B cell (primary cell): ENCODE measurements at regions of chr22 and their contacts with region 1.

Region 1: GRCh38 chr22:36123673-36124630 is 36.6 kb downstream of the APOL3 start:
- DNase-seq: peak; percentile 94
- ATAC-seq: peak; percentile 100
- H3K4me3 ChIP-seq: peak overlapping the region; percentile 15 to 55 (median 44)
- H3K4me3 Mint-ChIP-seq: peak overlapping the region; percentile 88
- H3K27ac ChIP-seq: peak overlapping the region in 1 of 2 donors; percentile 14
- H3K27ac Mint-ChIP-seq: peak overlapping the region; percentile 83
- H3K4me1 ChIP-seq: peaks cover 0 to 9% of the 10 kb centered on the region in 2 donors
- H3K4me1 Mint-ChIP-seq: peaks cover 6% of the 10 kb centered on the region
- H3K27me3 ChIP-seq: peaks cover 0 to 14% (median 7%) of the 10 kb centered on the region in 4 experiments
- H3K27me3 Mint-ChIP-seq: peaks cover 9% of the 10 kb centered on the region
- CTCF ChIP-seq: peak; percentile 96

Region 2: GRCh38 chr22:35430897-35431322 is 693.0 kb before region 1 on chr22:
- CTCF ChIA-PET with region 1: interaction called, 3 read pairs
- POLR2A ChIA-PET with region 1: no interaction called
- intact Hi-C with region 1: loop called (anchors 10 kb)
- DNase-seq: peak; percentile 68
- ATAC-seq: peak; percentile 80
- H3K4me3 ChIP-seq: no peak overlapping the region
- H3K4me3 Mint-ChIP-seq: no peak overlapping the region
- H3K27ac ChIP-seq: no peak overlapping the region
- H3K27ac Mint-ChIP-seq: no peak overlapping the region
- H3K4me1 ChIP-seq: no peaks in the 10 kb centered on the region
- H3K4me1 Mint-ChIP-seq: peaks cover 6% of the 10 kb centered on the region
- H3K27me3 ChIP-seq: no peaks in the 10 kb centered on the region
- H3K27me3 Mint-ChIP-seq: no peaks in the 10 kb centered on the region
- CTCF ChIP-seq: peak; percentile 82

Region 3: GRCh38 chr22:35582861-35583670 is 540.9 kb before region 1 on chr22:
- CTCF ChIA-PET with region 1: interaction called, 9 read pairs
- POLR2A ChIA-PET with region 1: no interaction called
- intact Hi-C with region 1: loop called (anchors 10 kb)
- DNase-seq: peak; percentile 81
- ATAC-seq: peak; percentile 77
- H3K4me3 ChIP-seq: no peak overlapping the region
- H3K4me3 Mint-ChIP-seq: no peak overlapping the region
- H3K27ac ChIP-seq: no peak overlapping the region
- H3K27ac Mint-ChIP-seq: no peak overlapping the region
- H3K4me1 ChIP-seq: peaks cover 0 to 7% of the 10 kb centered on the region in 2 donors
- H3K4me1 Mint-ChIP-seq: no peaks in the 10 kb centered on the region
- H3K27me3 ChIP-seq: no peaks in the 10 kb centered on the region
- H3K27me3 Mint-ChIP-seq: no peaks in the 10 kb centered on the region
- CTCF ChIP-seq: peak; percentile 95

Region 4: GRCh38 chr22:35622191-35622913 is 501.6 kb before region 1 on chr22:
- CTCF ChIA-PET with region 1: interaction called, 3 read pairs
- POLR2A ChIA-PET with region 1: no interaction called
- intact Hi-C with region 1: loop called (anchors 5 kb)
- DNase-seq: no peak
- ATAC-seq: no peak
- H3K4me3 ChIP-seq: no peak overlapping the region
- H3K4me3 Mint-ChIP-seq: no peak overlapping the region
- H3K27ac ChIP-seq: no peak overlapping the region
- H3K27ac Mint-ChIP-seq: no peak overlapping the region
- H3K4me1 ChIP-seq: peaks cover 5% of the 10 kb centered on the region in 2 donors
- H3K4me1 Mint-ChIP-seq: peaks cover 5% of the 10 kb centered on the region
- H3K27me3 ChIP-seq: peaks cover 0 to 32% (median 22%) of the 10 kb centered on the region in 4 experiments
- H3K27me3 Mint-ChIP-seq: peaks cover 33% of the 10 kb centered on the region
- CTCF ChIP-seq: no peak

Region 5: DNA sequence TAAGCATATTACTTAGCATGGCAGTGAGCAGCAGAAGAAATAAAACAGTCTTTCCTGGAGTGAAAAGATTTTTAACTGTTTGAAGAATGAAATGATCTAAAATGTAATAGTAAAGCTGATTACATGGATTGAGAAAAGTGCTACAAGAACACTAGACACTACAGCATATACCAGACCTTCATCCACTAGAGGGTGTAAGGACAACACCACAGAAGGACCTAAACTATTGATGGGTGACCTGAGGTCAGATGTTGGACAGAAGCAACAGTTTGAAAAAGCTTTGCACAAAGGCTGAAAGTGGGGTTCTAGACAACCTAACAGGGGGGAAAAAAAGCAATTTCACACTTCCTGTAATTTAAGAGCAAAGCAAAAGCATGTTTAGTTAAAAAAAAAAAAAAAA is 193.0 kb before region 1 on chr22:
- CTCF ChIA-PET with region 1: interaction called, 12 read pairs
- POLR2A ChIA-PET with region 1: no interaction called
- intact Hi-C with region 1: no loop called
- DNase-seq: peak; percentile 34
- ATAC-seq: no peak
- H3K4me3 ChIP-seq: no peak overlapping the region
- H3K4me3 Mint-ChIP-seq: no peak overlapping the region
- H3K27ac ChIP-seq: no peak overlapping the region
- H3K27ac Mint-ChIP-seq: no peak overlapping the region
- H3K4me1 ChIP-seq: no peaks in the 10 kb centered on the region
- H3K4me1 Mint-ChIP-seq: no peaks in the 10 kb centered on the region
- H3K27me3 ChIP-seq: peaks cover 0 to 4% (median 2%) of the 10 kb centered on the region in 4 experiments
- H3K27me3 Mint-ChIP-seq: peaks cover 7% of the 10 kb centered on the region
- CTCF ChIP-seq: no peak

Region 6: DNA sequence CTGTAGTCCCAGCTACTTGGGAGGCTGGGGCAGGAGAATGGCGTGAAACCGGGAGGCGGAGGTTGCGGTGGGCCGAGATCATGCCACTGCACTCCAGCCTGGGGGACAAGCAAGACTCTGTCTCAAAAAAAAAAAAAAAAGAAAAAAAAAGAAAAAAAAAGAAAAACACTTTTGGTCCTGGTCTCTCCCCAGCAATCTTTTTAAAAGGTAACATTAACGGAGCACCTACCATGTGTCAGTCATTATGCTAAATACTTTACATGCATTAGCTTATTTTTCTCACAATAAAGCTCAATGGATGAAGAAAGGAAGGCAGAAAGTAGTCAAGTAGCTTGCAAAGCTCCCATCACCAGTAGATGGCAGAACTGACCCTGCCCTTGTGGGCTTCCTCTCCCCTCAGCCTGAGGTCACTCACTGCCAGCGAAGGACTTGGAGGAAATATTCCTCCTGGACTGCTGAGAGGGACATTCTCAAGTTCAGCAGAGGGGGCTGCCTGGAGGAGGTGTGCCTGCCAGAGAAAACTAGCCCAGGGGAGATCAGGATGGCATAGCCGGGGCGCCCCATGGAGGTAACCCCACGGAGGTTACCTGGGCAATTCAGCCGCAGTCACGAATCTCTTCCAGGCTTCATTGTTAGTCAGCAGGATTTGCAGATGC is 21.1 kb after region 1 on chr22:
- CTCF ChIA-PET with region 1: no interaction called
- POLR2A ChIA-PET with region 1: no interaction called
- intact Hi-C with region 1: no loop called
- DNase-seq: peak; percentile 55
- ATAC-seq: peak; percentile 74
- H3K4me3 ChIP-seq: no peak overlapping the region
- H3K4me3 Mint-ChIP-seq: no peak overlapping the region
- H3K27ac ChIP-seq: no peak overlapping the region
- H3K27ac Mint-ChIP-seq: no peak overlapping the region
- H3K4me1 ChIP-seq: no peaks in the 10 kb centered on the region
- H3K4me1 Mint-ChIP-seq: peaks cover 1% of the 10 kb centered on the region
- H3K27me3 ChIP-seq: no peaks in the 10 kb centered on the region
- H3K27me3 Mint-ChIP-seq: no peaks in the 10 kb centered on the region
- CTCF ChIP-seq: peak; percentile 69

Region 7: DNA sequence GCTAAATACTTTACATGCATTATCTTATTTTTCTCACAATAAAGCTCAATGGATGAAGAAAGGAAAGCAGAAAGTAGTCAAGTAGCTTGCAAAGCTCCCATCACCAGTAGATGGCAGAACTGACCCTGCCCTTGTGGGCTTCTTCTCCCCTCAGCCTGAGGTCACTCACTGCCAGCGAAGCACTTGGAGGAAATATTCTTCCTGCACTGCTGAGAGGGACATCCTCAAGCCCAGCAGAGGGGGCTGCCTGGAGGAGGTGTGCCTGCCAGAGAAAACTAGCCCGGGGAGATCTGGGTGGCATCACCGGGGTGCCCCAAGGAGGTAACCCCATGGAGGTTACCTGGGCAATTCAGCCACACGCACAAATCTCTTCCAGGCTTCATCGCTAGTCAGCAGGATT is 71.0 kb after region 1 on chr22:
- CTCF ChIA-PET with region 1: no interaction called
- POLR2A ChIA-PET with region 1: no interaction called
- intact Hi-C with region 1: no loop called
- DNase-seq: peak; percentile 47
- ATAC-seq: peak; percentile 49
- H3K4me3 ChIP-seq: no peak overlapping the region
- H3K4me3 Mint-ChIP-seq: no peak overlapping the region
- H3K27ac ChIP-seq: no peak overlapping the region
- H3K27ac Mint-ChIP-seq: no peak overlapping the region
- H3K4me1 ChIP-seq: peaks cover 7 to 16% of the 10 kb centered on the region in 2 donors
- H3K4me1 Mint-ChIP-seq: peaks cover 19% of the 10 kb centered on the region
- H3K27me3 ChIP-seq: peaks cover 0 to 13% (median 0%) of the 10 kb centered on the region in 4 experiments
- H3K27me3 Mint-ChIP-seq: peaks cover 13% of the 10 kb centered on the region
- CTCF ChIP-seq: peak; percentile 58

Region 8: DNA sequence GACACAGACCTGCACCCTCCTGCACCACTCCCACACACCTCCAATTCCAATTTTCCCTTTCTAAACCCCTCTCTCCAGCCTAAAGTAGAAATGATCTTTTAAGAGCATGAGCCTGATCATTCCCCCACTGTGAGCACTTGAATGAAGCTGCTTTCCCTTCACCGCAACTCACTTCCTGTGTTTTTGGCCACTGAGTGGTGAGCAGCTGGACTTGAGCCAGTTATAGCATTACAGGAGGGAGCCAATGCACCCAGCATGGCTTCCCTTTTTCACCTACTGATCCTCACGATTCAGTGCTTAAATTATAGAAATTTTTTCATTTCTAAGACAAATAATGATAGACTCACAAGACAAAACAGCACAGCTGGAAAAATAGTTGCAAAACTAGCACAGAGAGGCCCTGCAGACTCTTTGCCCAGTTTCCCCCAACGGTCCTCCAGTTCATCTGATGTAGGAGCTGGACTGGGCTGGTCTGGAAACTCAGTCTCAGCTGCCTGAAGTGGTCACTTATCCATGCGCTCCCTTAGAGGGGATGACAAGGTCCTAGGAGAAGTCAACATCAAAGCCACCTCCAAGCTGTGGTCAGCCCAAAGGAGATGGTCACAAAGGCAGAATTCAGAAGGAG is 87.4 kb after region 1 on chr22:
- CTCF ChIA-PET with region 1: no interaction called
- POLR2A ChIA-PET with region 1: no interaction called
- intact Hi-C with region 1: no loop called
- DNase-seq: no peak
- ATAC-seq: no peak
- H3K4me3 ChIP-seq: no peak overlapping the region
- H3K4me3 Mint-ChIP-seq: no peak overlapping the region
- H3K27ac ChIP-seq: no peak overlapping the region
- H3K27ac Mint-ChIP-seq: no peak overlapping the region
- H3K4me1 ChIP-seq: peaks cover 17 to 22% of the 10 kb centered on the region in 2 donors
- H3K4me1 Mint-ChIP-seq: peaks cover 24% of the 10 kb centered on the region
- H3K27me3 ChIP-seq: no peaks in the 10 kb centered on the region
- H3K27me3 Mint-ChIP-seq: peaks cover 8% of the 10 kb centered on the region
- CTCF ChIP-seq: no peak